ENCODE measurements at regions of chr2 and their contacts with region 1.

Region 1: GRCh38 chr2:30225131-30225762 is 6.1 kb upstream of the LBH start:
- DNase-seq: peak; percentile 48
- H3K4me3 Mint-ChIP-seq: peak overlapping the region; percentile 91
- H3K27ac Mint-ChIP-seq: peak overlapping the region; percentile 97
- H3K4me1 Mint-ChIP-seq: peaks cover 77% of the 10 kb centered on the region
- H3K27me3 Mint-ChIP-seq: peaks cover 5% of the 10 kb centered on the region

Region 2: DNA sequence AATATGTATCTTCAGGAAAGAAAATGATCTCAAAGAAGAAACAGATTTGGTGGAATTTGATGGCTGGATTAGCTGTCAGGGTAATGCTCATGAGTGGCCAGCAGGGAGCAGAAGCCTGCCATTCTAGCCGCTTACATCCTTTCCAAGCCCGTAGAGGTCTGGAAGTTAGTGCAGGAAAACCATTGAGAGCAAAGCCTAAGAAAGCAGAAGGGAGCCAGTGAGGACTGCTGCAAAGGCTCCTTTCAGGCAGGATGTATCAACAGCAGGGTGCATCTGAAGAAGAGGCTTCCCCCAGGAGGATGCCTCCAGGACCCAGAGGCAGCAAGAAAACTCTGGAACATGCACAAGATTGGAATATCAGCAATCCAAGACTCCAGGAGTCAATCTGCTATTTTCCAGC is 16.8 kb before region 1 on chr2:
- intact Hi-C with region 1: loop called (anchors 1 kb)
- DNase-seq: no peak
- H3K4me3 Mint-ChIP-seq: no peak overlapping the region
- H3K27ac Mint-ChIP-seq: no peak overlapping the region
- H3K4me1 Mint-ChIP-seq: peaks cover 22% of the 10 kb centered on the region
- H3K27me3 Mint-ChIP-seq: peaks cover 6% of the 10 kb centered on the region

Region 3: DNA sequence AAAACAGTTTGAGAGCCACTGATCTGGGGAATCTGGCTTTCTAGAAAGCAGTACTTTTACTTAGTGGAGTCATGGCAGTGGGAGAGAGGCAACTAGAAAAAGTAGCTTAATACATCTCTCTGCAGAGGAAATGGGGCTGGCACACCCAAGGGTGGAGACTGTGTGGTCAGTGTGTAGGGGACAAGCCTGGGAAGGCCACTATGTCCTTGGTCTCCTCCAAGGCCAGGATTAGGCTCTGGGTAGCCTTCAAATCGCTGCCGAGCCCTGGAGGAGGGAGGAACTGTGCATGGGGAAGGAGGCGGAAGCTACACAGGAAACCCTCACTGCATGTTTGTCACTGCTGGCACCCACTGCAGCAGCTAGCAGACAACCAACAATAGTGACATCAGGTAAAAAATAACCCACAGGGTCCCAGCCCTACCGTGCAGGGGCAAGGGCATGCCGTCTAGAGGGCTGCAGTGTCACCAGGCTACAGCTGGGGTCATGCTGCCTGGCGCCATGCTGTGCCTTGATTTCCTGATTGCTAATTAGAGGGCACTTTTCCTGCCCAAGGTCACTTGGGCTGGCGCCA is 40.9 kb after region 1 on chr2:
- intact Hi-C with region 1: loop called (anchors 1 kb)
- DNase-seq: peak; percentile 51
- H3K4me3 Mint-ChIP-seq: peak overlapping the region; percentile 84
- H3K27ac Mint-ChIP-seq: peak overlapping the region; percentile 97
- H3K4me1 Mint-ChIP-seq: peaks cover 82% of the 10 kb centered on the region
- H3K27me3 Mint-ChIP-seq: no peaks in the 10 kb centered on the region

Region 4: DNA sequence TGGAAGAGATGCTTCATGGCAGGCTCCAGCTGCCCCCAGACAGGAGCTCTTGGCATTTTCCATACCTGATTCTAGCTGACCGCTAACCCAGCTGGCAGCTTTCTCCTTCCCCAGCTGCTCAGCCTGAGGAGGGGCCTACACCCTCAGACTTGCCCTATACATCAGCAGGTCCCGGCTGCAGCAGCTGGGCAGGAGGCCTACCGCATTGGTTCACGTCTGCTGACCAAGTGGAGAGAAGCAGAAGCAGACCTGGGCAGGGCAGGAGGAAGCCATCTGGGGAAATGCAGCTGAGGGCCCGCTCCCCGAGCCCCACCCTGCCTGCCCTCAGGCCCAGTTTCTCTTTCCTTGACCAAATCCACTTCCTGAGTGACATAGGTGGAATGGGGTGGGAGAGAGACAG is 56.8 kb after region 1 on chr2:
- intact Hi-C with region 1: no loop called
- DNase-seq: no peak
- H3K4me3 Mint-ChIP-seq: no peak overlapping the region
- H3K27ac Mint-ChIP-seq: no peak overlapping the region
- H3K4me1 Mint-ChIP-seq: peaks cover 28% of the 10 kb centered on the region
- H3K27me3 Mint-ChIP-seq: peaks cover 3% of the 10 kb centered on the region

Region 5: GRCh38 chr2:30310955-30311354 is 85.7 kb after region 1 on chr2:
- intact Hi-C with region 1: no loop called
- DNase-seq: no peak
- H3K4me3 Mint-ChIP-seq: no peak overlapping the region
- H3K27ac Mint-ChIP-seq: peak overlapping the region; percentile 40
- H3K4me1 Mint-ChIP-seq: peaks cover 37% of the 10 kb centered on the region
- H3K27me3 Mint-ChIP-seq: no peaks in the 10 kb centered on the region

Region 6: GRCh38 chr2:30447149-30448045 is 222.2 kb after region 1 on chr2 and contains the start of gene LCLAT1:
- intact Hi-C with region 1: loop called (anchors 1 kb)
- DNase-seq: peak; percentile 84
- H3K4me3 Mint-ChIP-seq: peak within 1 kb of the TSS; percentile 96
- H3K27ac Mint-ChIP-seq: peak within 1 kb of the TSS; percentile 98
- H3K4me1 Mint-ChIP-seq: peaks cover 42% of the 10 kb centered on the region
- H3K27me3 Mint-ChIP-seq: no peaks in the 10 kb centered on the region
- total RNA-seq, gene LCLAT1: 40.1 and 46.2 TPM in 2 replicates

Measured in activated T-helper 1 cell treated with anti-CD3 and anti-CD28 coated beads, Interleukin-12 subunit alpha, Interleukin-12 subunit beta, Interleukin-2, Interleukin-4 antibody, amounts not matched to agents 30 ng/mL and 10 ng/mL and 1 ng/mL, durations not matched to agents 14 hours and 24 hours and 36 hours (primary cell).